Thyroid gland (tissue), 4 donors: ENCODE measurements at regions of chr13 and their contacts with region 1.

Region 1: DNA sequence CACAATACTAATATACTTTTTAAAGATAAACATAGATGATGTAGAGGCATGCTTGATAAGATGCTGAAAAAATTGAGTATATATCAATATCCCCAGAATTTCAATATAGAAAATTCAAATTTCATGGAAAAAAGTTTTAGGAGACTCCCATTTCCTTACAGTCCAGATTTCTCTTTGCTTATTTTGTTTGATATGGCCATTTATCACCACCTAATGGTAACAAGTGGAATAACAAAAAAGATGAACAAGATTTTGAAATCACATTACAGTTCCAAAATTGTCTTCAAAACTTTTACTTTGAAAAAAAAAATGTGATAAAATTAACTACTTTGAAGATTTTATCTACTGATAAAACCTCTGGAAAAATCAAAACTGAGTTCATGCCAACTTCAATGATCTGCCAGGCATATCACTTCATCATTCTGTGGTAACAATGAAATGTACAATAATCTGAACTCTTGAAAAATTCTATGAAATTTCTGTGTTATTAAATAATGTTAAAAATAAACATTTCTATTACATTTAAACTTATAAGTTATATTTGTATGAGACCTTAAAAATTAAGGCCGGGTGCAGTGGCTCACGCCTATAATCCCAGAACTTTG is 17.5 kb downstream of the MIPEP start:
- DNase-seq: no peak
- H3K4me3 ChIP-seq: no peak overlapping the region
- H3K27ac ChIP-seq: no peak overlapping the region
- H3K4me1 ChIP-seq: no peaks in the 10 kb centered on the region
- H3K27me3 ChIP-seq: no peaks in the 10 kb centered on the region
- CTCF ChIP-seq: peak; percentile 11 to 81 (median 44)
- POLR2A ChIP-seq: no peak

Region 2: DNA sequence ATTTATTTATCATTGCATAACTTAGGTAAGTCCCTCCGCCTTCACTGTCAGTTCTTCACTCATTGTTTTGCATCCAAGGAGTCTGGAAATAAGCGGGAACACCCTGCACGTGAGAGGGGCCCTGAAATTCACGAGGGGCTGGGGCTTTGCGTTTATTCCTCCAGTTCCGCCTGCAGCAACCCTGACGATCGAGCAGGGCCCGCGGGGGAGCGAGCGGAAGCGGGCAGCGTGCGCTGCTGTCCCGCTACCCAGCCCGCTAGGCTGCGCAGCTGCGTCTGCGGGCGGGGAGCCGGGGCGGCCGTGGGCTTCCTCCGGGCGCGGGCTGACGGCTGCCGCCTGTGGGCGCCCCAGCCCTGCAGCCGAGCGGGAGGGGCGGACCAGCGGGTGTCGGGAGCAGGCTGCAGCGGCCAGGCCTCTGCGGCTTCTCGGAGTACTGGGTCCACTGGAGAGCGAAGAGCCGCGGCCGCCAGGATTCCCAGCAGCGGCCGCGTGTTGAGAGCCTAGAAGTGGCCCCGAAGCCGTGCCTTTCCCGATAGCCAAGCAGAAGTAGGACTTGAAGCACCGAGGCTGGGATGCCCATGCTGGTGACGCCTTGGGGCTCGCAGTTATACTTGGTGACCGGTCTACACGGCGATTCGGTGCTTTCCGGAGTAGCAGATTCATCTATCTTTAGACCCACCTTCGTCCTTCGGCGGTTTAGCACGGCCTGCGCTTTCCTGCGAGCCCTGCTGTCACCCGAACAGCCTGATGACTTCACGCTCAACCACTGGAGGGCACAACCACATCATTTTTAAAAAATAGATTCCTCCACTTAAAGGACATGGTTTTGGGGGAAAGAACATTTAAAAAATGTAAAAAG is 405.3 kb before region 1 on chr13:
- intact Hi-C with region 1: loop called (anchors 5 kb)
- DNase-seq: peak; percentile 68 to 74
- H3K4me3 ChIP-seq: peak overlapping the region in 2 of 3 donors; percentile 31 to 38
- H3K27ac ChIP-seq: peak overlapping the region in 2 of 3 donors; percentile 43 to 69
- H3K4me1 ChIP-seq: peaks cover 0 to 5% of the 10 kb centered on the region in 2 donors
- H3K27me3 ChIP-seq: no peaks in the 10 kb centered on the region
- CTCF ChIP-seq: peak in 4 of 6 experiments; percentile 56 to 64 (median 58)
- POLR2A ChIP-seq: no peak

Region 3: GRCh38 chr13:23715762-23716235 is 155.9 kb before region 1 on chr13:
- intact Hi-C with region 1: loop called (anchors 5 kb)
- DNase-seq: peak; percentile 62
- H3K4me3 ChIP-seq: no peak overlapping the region
- H3K27ac ChIP-seq: no peak overlapping the region
- H3K4me1 ChIP-seq: no peaks in the 10 kb centered on the region
- H3K27me3 ChIP-seq: no peaks in the 10 kb centered on the region
- CTCF ChIP-seq: peak in 4 of 6 experiments; percentile 52 to 64 (median 60)
- POLR2A ChIP-seq: no peak